ENCODE measurements at regions of chr1 and their contacts with region 1.

Region 1: GRCh38 chr1:187264995-187265602 is 436.4 kb downstream of the PLA2G4A start:
- DNase-seq: peak in 1 of 2 experiments; percentile 30
- H3K4me3 ChIP-seq: no peak overlapping the region
- H3K4me3 Mint-ChIP-seq: no peak overlapping the region
- H3K27ac Mint-ChIP-seq: no peak overlapping the region
- H3K4me1 ChIP-seq: no peaks in the 10 kb centered on the region
- H3K4me1 Mint-ChIP-seq: no peaks in the 10 kb centered on the region
- H3K27me3 ChIP-seq: peaks cover 1% of the 10 kb centered on the region; the same call in 1 of the 2 replicates
- H3K27me3 Mint-ChIP-seq: peaks cover 3% of the 10 kb centered on the region
- CTCF ChIP-seq: peak; percentile 22 to 31

Region 2: DNA sequence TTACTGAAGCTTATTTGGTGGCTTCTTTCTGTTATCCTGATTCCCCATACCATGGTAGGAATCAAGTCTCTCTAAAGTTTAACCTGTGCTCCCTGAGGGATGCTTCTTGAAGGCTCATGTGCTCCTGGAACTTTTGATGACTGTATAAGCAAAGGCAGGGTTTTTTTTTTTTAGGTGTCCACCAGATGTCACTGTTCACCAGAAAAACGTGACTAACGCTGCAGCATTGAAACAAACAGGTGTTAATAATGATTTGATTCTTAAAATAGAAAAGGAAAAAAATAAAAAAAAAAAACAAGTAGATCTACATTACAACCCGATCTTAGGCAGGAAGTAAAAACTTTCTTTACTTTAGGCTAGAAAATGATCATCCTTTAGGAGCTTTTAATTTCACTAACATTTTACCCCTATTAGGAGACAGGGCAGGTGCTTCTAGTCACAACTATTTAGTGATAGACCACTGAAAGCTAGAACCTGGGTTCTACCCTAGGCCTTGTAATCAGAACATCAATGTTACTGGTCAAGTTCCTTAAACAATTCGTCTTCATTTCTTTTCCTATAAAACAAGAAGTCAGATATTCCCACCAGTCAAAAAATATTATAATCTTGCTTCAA is 213.4 kb before region 1 on chr1:
- CTCF ChIA-PET with region 1: no interaction called
- POLR2A ChIA-PET with region 1: no interaction called
- intact Hi-C with region 1: loop called (anchors 5 kb)
- DNase-seq: peak in 1 of 2 experiments; percentile 35
- H3K4me3 ChIP-seq: no peak overlapping the region
- H3K4me3 Mint-ChIP-seq: no peak overlapping the region
- H3K27ac Mint-ChIP-seq: no peak overlapping the region
- H3K4me1 ChIP-seq: no peaks in the 10 kb centered on the region
- H3K4me1 Mint-ChIP-seq: no peaks in the 10 kb centered on the region
- H3K27me3 ChIP-seq: no peaks in the 10 kb centered on the region
- H3K27me3 Mint-ChIP-seq: peaks cover 3% of the 10 kb centered on the region
- CTCF ChIP-seq: peak; percentile 38 to 50

Region 3: DNA sequence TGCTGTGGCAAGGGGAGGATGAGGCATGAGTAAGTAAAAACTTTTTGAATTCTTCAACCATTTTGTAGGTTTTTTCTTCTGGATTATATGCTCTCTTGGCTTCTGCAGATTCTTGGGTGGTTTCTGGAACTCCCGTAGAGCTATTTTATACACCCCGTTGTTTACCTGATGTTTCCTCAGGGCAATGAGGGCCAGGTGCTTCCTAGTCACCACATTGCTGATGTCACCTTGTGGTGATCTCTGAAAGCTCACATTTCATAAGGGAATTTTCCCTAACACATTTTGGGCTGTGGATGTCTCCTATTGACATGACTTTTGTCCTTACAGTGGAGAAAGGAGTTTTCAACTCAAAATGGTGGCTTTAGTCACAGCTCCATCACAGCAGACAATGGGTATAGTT is 79.7 kb before region 1 on chr1:
- CTCF ChIA-PET with region 1: no interaction called
- POLR2A ChIA-PET with region 1: no interaction called
- intact Hi-C with region 1: no loop called
- DNase-seq: no peak
- H3K4me3 ChIP-seq: no peak overlapping the region
- H3K4me3 Mint-ChIP-seq: no peak overlapping the region
- H3K27ac Mint-ChIP-seq: no peak overlapping the region
- H3K4me1 ChIP-seq: no peaks in the 10 kb centered on the region
- H3K4me1 Mint-ChIP-seq: no peaks in the 10 kb centered on the region
- H3K27me3 ChIP-seq: no peaks in the 10 kb centered on the region
- H3K27me3 Mint-ChIP-seq: no peaks in the 10 kb centered on the region
- CTCF ChIP-seq: no peak